Activated CD4-positive, alpha-beta memory T cell treated with anti-CD3 and anti-CD28 coated beads for 36 hours (primary cell): ENCODE measurements at regions of chr15 and their contacts with region 1.

Region 1: GRCh38 chr15:68672781-68673205 is 94.0 kb downstream of the CORO2B start:
- DNase-seq: no peak
- H3K4me3 Mint-ChIP-seq: no peak overlapping the region
- H3K27ac Mint-ChIP-seq: no peak overlapping the region
- H3K4me1 Mint-ChIP-seq: peaks cover 2% of the 10 kb centered on the region
- H3K27me3 Mint-ChIP-seq: peaks cover 16% of the 10 kb centered on the region

Region 2: GRCh38 chr15:68252925-68253534 is 419.8 kb before region 1 on chr15:
- CTCF ChIA-PET with region 1: interaction called, 11 read pairs
- POLR2A ChIA-PET with region 1: no interaction called
- intact Hi-C with region 1: no loop called
- DNase-seq: peak; percentile 36
- H3K4me3 Mint-ChIP-seq: no peak overlapping the region
- H3K27ac Mint-ChIP-seq: no peak overlapping the region
- H3K4me1 Mint-ChIP-seq: peaks cover 4% of the 10 kb centered on the region
- H3K27me3 Mint-ChIP-seq: peaks cover 3% of the 10 kb centered on the region

Region 3: GRCh38 chr15:68550481-68551295 is 122.1 kb before region 1 on chr15:
- CTCF ChIA-PET with region 1: interaction called, 164 read pairs
- POLR2A ChIA-PET with region 1: no interaction called
- intact Hi-C with region 1: loop called (anchors 1 kb)
- DNase-seq: peak; percentile 81
- H3K4me3 Mint-ChIP-seq: no peak overlapping the region
- H3K27ac Mint-ChIP-seq: no peak overlapping the region
- H3K4me1 Mint-ChIP-seq: peaks cover 6% of the 10 kb centered on the region
- H3K27me3 Mint-ChIP-seq: peaks cover 49% of the 10 kb centered on the region

Region 4: DNA sequence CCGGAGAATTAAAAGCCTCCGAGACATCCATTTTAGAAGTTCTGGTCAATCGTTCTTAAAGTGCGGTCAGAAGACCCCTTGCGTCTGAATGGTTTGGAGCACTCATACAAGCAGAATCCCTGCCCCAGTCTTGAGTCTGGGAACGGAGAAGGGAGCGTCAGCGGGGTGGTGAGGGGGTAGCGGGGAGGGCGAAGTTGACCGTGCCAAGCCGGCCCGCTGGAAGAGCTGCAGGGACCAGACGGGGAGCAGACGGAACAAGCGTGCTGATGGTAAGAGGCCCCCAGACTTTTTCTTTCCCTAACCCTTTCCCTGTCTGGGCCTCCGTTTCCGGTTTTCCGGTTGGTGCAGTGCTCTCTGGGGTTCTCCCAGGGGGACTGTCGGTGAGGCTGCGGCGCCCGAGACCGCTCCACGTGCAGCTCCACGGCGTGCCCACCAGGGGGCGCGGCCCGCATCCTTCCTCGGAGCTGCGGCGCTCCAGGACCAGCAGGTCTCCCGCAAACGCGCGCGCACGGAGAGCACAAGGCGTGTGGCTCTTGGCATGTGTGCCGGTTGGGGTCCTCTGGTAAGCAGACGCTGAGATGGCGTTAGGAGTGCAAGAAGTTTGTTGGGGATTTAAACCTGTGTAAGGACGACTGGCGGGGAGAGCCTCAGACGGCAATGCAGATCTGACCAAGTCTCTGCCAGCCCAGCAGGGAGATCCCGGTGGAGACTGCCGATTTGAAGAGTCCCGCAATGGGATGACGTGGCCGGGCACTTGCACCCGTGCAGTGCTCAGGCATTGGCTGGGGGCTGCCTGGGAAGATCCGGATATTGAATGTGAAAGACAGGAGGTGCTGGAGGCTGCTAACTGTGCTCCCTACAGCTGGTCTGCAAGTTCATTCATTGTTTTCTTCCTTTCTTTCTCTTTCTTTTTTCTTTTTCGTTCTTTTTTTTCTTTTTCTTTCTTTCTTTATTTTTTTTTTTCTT is 113.2 kb before region 1 on chr15:
- CTCF ChIA-PET with region 1: interaction called, 164 read pairs
- POLR2A ChIA-PET with region 1: no interaction called
- intact Hi-C with region 1: loop called (anchors 1 kb)
- DNase-seq: peak; percentile 78
- H3K4me3 Mint-ChIP-seq: peak overlapping the region; percentile 48
- H3K27ac Mint-ChIP-seq: no peak overlapping the region
- H3K4me1 Mint-ChIP-seq: peaks cover 14% of the 10 kb centered on the region
- H3K27me3 Mint-ChIP-seq: peaks cover 45% of the 10 kb centered on the region

Region 5: DNA sequence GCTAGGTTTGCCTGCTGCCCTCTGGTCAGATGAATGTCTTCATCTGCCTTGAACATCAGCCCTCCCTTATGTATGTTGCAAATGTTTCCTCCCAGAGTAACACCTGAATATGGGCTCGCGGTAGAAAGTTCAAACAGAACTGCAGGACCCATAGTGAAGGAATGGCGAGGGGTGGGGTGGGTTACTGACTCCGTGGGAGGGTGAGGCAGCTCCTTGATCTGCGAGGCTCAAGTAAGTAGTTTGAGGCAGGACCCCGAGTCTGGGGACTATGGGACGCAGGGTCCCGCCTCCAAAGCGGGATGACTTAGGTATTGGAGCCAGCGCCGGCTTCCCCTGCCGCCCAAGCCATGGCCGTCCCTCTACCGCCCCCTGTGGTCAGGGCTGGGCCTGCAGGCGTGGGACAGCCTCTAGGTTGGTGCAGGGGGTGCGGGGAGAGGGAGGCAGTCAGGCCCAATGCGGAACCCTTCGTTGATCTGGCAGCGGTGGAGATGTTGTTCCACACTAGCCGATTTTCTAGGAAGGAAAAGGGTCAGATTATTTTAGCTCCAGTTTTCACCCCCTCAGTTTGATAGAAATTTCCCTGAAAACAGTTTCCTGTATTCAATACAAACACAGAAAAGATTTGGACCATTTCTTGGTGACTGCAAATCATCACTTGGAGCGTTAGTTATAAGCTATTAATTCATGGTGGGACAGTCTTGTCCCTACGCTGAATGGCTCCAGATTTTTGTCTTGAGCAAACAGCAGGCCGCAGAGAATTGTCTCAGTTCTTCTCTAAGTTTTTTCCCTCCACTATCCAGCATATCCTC is 21.7 kb before region 1 on chr15:
- CTCF ChIA-PET with region 1: interaction called, 19 read pairs
- POLR2A ChIA-PET with region 1: no interaction called
- intact Hi-C with region 1: no loop called
- DNase-seq: peak; percentile 60
- H3K4me3 Mint-ChIP-seq: no peak overlapping the region
- H3K27ac Mint-ChIP-seq: no peak overlapping the region
- H3K4me1 Mint-ChIP-seq: no peaks in the 10 kb centered on the region
- H3K27me3 Mint-ChIP-seq: no peaks in the 10 kb centered on the region

Region 6: GRCh38 chr15:68687136-68687735 is 14.4 kb after region 1 on chr15:
- CTCF ChIA-PET with region 1: interaction called, 11 read pairs
- POLR2A ChIA-PET with region 1: no interaction called
- intact Hi-C with region 1: no loop called
- DNase-seq: no peak
- H3K4me3 Mint-ChIP-seq: no peak overlapping the region
- H3K27ac Mint-ChIP-seq: no peak overlapping the region
- H3K4me1 Mint-ChIP-seq: no peaks in the 10 kb centered on the region
- H3K27me3 Mint-ChIP-seq: peaks cover 2% of the 10 kb centered on the region